ENCODE measurements at regions of chr2 and their contacts with region 1.

Region 1: DNA sequence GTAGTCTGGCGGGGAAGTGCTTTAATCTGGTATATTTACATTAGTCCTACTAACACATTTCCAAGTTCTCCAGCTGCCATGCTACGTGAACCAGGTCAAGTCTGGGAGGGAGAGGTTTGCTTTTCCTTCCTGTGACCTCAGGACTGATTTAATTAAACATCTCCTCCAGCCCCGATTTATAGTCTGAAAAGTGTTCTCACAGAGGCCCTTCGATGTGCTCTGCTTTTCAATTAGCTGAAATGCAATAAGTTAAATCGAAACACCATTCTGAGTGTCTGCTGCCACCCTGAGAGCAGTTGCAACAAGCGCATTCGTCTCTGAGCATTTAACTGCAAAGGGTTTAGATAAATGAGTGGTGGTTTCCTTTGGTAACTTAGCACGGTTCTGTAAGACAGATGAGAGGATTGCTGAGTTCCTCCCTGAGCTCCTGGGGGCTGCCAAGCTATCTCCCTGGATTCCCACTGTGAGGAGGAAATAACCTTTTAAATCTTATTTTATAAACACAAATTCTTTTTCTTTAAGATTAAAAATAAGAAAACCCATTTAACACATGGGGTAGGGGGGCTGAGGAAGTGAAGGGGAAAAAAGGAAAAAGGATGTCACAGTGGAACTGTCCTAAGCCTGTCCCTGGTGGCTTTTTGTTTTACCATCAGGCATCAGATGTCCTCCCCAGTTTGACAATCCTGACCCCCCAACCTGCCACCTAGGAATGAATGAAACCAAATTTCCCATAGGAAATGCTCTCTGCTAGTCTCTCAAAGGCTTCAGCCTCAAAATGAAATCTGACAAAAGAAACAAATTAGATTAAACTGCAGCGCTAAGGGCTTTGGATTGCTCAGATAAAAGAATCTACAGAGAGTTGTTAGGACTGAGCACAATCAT is 56.5 kb upstream of the CREB1 start:
- DNase-seq: peak in 4 of 5 donors; percentile 47 to 50 (median 49)
- ATAC-seq: peak; percentile 57 to 89 (median 88)
- H3K4me3 ChIP-seq: peak overlapping the region in 4 of 12 donors; percentile 16 to 45 (median 29)
- H3K27ac ChIP-seq: peak overlapping the region in 6 of 12 donors; percentile 9 to 56 (median 38)
- H3K4me1 ChIP-seq: peaks cover 0 to 29% (median 13%) of the 10 kb centered on the region in 12 donors
- H3K27me3 ChIP-seq: no peaks in the 10 kb centered on the region
- CTCF ChIP-seq: peak; percentile 48 to 82 (median 72)
- POLR2A ChIP-seq: no peak

Region 2: DNA sequence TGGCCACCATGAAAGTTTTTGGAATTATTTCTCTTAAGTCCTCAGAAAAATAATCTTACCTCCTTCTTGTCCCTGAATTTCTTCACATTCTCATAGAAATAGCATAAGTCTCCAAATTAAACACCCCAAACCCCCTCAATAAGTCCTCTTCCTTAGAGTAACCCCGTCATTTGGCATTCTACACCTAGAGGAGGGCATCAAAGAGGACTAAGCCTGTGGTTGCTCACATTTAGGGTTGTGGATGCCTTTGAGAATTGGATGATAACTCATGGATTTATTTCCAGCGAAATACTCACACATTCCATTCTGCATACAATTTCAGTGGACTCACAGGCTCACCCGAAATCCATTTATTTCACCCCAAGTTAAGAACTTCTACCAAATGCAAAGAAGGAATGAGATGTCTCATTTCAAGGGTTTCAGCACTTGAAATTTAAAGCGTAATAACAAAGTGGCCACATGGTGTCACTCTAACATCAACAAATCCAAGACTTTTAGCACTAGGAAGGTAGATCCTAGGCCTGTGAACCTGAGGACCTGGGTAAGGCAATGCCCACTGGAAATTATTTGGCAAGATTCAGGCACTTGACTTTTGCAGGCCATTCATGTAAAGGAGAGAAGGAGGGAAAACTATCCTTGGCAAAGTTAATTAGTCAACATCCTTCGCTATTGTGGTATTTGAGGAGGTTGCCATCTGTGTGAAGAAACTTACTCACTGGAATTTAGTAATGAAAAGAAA is 779.7 kb before region 1 on chr2:
- intact Hi-C with region 1: loop called in 9 of 10 experiments (anchors 2 to 10 kb)
- DNase-seq: no peak
- ATAC-seq: peak in 3 of 4 donors; percentile 60 to 74 (median 67)
- H3K4me3 ChIP-seq: no peak overlapping the region
- H3K27ac ChIP-seq: no peak overlapping the region
- H3K4me1 ChIP-seq: no peaks in the 10 kb centered on the region
- H3K27me3 ChIP-seq: peaks cover 0 to 5% (median 0%) of the 10 kb centered on the region in 9 donors
- CTCF ChIP-seq: peak; percentile 48 to 78 (median 62)
- POLR2A ChIP-seq: no peak

Region 3: GRCh38 chr2:206981739-206982340 is 491.4 kb before region 1 on chr2:
- intact Hi-C with region 1: loop called (anchors 1 to 2 kb)
- DNase-seq: peak; percentile 69 to 80 (median 72)
- ATAC-seq: peak; percentile 87 to 96 (median 93)
- H3K4me3 ChIP-seq: peak overlapping the region in 1 of 12 donors; percentile 13
- H3K27ac ChIP-seq: no peak overlapping the region
- H3K4me1 ChIP-seq: peaks cover 0 to 29% (median 16%) of the 10 kb centered on the region in 12 donors
- H3K27me3 ChIP-seq: no peaks in the 10 kb centered on the region
- CTCF ChIP-seq: peak; percentile 57 to 94 (median 87)
- POLR2A ChIP-seq: no peak

Region 4: GRCh38 chr2:207223051-207223450 is 250.2 kb before region 1 on chr2:
- intact Hi-C with region 1: loop called in 1 of 10 experiments (anchors 10 kb)
- DNase-seq: no peak
- ATAC-seq: no peak
- H3K4me3 ChIP-seq: no peak overlapping the region
- H3K27ac ChIP-seq: no peak overlapping the region
- H3K4me1 ChIP-seq: peaks cover 0 to 39% (median 23%) of the 10 kb centered on the region in 12 donors
- H3K27me3 ChIP-seq: no peaks in the 10 kb centered on the region
- CTCF ChIP-seq: no peak
- POLR2A ChIP-seq: no peak

Region 5: DNA sequence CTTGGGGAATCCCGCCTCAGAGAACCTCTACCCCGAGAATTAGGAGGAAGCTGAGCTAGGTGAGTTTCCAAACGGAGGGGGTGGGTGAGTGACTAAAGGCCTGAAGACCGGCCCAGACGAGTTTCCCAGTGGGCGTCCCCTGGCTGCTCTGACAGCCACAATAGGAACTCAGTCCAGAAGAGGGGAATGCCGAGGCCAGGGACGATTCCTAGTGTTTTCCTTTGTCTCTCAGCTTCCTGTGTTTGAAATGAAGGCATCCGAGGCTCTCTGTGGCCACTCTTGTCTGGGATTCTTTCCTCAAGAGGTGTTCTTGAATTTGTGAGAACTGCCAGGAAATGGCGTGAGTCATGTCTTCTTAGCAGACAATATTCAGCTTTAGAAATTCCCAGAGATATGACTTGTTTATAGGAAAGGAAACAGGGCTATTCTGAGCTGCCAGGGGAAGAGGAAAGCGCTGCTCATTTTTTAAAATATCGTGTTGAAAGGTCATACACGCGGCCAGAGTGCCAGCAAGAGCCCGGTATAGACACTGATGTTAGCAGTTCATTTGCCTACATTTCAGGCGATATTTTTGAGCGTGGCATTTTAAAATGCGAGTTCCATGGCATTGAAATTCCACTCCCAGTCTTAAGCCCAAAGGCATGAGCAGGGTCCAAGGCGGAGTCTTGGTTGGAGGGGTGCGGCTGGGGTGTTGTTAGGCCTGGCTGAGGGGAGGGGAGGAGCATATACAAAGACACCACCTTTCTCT is 138.5 kb before region 1 on chr2:
- intact Hi-C with region 1: loop called in 1 of 10 experiments (anchors 10 kb)
- DNase-seq: peak; percentile 66 to 87 (median 77)
- ATAC-seq: peak; percentile 61 to 86 (median 84)
- H3K4me3 ChIP-seq: peak overlapping the region in 10 of 12 donors; percentile 12 to 45 (median 36)
- H3K27ac ChIP-seq: peak overlapping the region; percentile 73 to 96 (median 90)
- H3K4me1 ChIP-seq: peaks cover 2 to 82% (median 37%) of the 10 kb centered on the region in 12 donors
- H3K27me3 ChIP-seq: no peaks in the 10 kb centered on the region
- CTCF ChIP-seq: peak in 1 of 12 donors; percentile 10
- POLR2A ChIP-seq: peak in 1 of 2 donors; percentile 32

Region 6: DNA sequence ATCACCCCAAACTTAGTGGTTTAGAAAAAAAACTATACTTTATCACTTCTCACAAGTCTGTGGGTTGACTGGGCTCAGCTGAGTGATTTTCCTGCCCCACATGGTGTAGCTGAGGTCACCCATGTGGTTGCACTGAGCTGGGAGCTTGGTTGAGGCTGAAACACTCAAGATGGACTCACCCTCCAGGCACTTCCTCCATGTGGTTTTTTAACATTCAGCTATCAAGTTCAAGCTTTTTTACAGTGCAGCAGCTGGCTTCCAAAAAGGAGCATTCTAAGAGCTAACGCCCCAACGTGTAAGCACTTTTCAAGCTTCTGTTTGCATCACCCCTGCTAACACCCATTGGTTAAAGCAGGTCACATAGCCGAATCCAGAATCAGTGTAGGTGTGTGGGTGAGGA is 49.4 kb before region 1 on chr2:
- intact Hi-C with region 1: no loop called
- DNase-seq: no peak
- ATAC-seq: no peak
- H3K4me3 ChIP-seq: no peak overlapping the region
- H3K27ac ChIP-seq: no peak overlapping the region
- H3K4me1 ChIP-seq: no peaks in the 10 kb centered on the region
- H3K27me3 ChIP-seq: no peaks in the 10 kb centered on the region
- CTCF ChIP-seq: no peak
- POLR2A ChIP-seq: no peak

Measured in heart left ventricle (tissue), 16 donors.